ENCODE measurements at regions of chr18 and their contacts with region 1.

Region 1: GRCh38 chr18:48859311-48860268 is 91.2 kb downstream of the SMAD7 start:
- DNase-seq: peak in 1 of 2 experiments; percentile 66
- H3K4me3 ChIP-seq: peak overlapping the region in 1 of 4 experiments; percentile 15; a peak in 1 of 8 replicates
- H3K27ac ChIP-seq: no peak overlapping the region
- H3K4me1 ChIP-seq: peaks cover 0 to 29% (median 22%) of the 10 kb centered on the region in 4 experiments; a peak in 6 of 7 replicates
- H3K27me3 ChIP-seq: no peaks in the 10 kb centered on the region
- CTCF ChIP-seq: no peak
- EP300 ChIP-seq: no peak
- POLR2A ChIP-seq: no peak
- RAD21 ChIP-seq: no peak

Region 2: DNA sequence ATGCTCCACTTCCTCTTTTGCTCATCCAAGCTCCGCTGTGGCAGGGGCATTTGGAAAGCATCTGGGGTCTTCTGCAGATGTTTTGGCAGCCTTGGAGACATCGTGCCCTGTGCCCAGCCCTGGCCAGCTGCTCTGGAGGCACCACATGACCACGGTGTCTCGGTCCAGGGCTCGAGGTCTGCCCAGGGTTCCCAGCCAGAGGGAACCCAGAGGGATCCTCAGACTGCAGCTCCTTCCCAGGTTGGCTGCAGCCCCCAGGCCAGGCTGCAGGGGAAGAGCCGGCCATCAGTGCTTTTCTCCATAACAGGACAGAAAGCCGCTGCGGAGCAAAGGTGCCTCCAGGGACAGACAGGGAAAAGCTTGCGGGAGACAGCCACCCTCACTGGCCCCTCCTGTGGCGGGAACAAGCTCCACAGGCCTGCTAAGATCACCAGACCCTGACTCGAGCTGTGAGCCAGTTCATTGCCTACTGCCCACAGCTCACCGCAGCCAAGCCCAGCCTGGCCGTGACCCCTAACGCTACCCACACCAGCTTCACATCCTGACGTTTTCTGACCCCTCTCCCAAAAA is 16.4 kb after region 1 on chr18:
- CTCF ChIA-PET with region 1: interaction called, 24 read pairs
- POLR2A ChIA-PET with region 1: interaction called, 6 read pairs
- DNase-seq: no peak
- H3K4me3 ChIP-seq: no peak overlapping the region
- H3K27ac ChIP-seq: no peak overlapping the region
- H3K4me1 ChIP-seq: peaks cover 0 to 13% (median 10%) of the 10 kb centered on the region in 4 experiments; a peak in 6 of 7 replicates
- H3K27me3 ChIP-seq: 0 out of 7 replicates have a peak, but pooled peaks cover 0 to 4% (median 1%) of the 10 kb centered on the region in 4 experiments
- CTCF ChIP-seq: peak in 2 of 3 experiments; percentile 35 to 42; a peak in 3 of 4 replicates
- EP300 ChIP-seq: no peak
- POLR2A ChIP-seq: no peak
- RAD21 ChIP-seq: peak in 1 of 2 experiments; percentile 47; a peak in 2 of 4 replicates

Region 3: DNA sequence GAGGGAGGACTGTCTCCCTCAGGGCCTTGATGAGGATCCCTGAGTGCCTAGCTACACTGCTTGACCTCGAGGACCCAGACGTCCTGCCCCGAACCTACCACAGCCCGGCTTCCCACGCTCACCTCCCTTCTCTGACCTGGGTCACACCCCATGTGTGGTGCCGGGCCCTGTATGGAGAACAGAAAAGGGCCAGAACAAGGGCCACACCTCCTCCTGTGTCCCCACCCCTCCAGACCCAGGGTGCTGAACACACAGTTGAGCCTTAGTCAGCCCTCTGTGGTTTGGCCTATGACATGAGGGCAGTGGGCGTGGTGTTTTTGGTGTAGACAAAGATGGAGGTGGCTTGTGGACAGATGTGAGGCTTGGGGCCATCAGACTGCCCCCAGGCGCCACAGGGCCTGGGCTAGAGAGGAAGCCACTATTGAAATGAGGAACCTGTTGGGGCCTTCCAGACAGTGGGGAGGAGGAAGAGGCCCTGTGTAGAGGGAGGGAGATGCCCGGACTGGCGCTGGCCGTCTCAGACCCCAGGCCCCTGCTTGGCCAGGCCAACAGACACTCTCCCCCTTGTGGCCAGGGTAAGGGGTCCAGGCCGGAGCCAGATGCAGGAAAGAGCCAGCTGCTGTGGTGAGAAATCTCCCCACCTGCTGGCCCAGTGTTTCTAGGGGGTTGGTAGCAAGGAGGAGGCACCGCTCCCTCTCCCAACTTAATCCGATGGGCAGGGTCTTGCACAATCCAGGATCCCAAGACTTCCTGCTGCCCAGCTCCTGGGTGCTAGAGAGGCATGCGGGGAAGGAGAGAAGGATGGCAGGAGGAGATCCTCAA is 37.3 kb after region 1 on chr18:
- CTCF ChIA-PET with region 1: interaction called, 16 read pairs
- POLR2A ChIA-PET with region 1: no interaction called
- DNase-seq: peak in 1 of 2 experiments; percentile 70
- H3K4me3 ChIP-seq: no peak overlapping the region
- H3K27ac ChIP-seq: no peak overlapping the region
- H3K4me1 ChIP-seq: peaks cover 0 to 5% (median 1%) of the 10 kb centered on the region in 4 experiments; a peak in 2 of 7 replicates
- H3K27me3 ChIP-seq: no peaks in the 10 kb centered on the region
- CTCF ChIP-seq: peak in 2 of 3 experiments; percentile 78 to 95; a peak in 3 of 4 replicates
- EP300 ChIP-seq: no peak
- POLR2A ChIP-seq: no peak
- RAD21 ChIP-seq: peak; percentile 75 to 86

Region 4: DNA sequence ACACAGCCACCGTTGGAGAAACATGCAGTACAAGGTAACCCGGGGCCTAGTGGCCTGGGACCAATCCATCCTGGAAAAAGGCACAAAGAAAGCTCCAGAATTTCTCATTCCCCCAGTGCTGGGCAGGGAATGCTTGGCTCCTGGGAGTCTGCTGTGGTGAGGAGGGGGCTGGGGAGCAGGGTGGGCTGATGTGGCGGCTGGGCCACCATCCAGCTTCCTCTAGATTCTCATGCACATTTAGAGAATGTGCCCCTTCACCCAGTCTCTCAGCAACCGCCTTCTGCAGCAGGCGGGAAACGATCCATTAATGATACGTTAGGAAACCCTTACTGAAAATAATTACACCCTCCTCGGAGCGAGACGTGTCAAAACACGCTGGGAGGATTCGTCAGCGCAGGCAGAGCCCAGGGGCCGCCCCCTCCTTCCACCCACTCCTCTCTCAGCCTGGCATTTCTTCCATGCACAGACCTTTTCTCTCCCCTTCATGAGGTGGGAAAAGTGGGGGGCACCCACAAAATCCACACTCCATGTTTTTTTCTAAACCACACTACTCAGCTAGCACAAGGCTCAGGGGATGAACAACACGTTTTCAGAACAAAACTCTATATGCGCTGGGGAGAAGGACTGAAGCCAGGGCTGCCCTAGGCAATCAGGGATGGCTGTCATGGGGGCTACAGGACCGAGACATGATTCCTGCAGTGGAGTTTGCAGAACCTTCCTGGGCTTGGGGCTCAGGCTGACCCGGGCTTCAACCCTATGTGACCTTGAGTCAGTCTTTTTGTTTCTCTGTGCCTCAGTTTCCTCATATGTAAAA is 147.3 kb after region 1 on chr18:
- CTCF ChIA-PET with region 1: no interaction called
- POLR2A ChIA-PET with region 1: no interaction called
- DNase-seq: no peak
- H3K4me3 ChIP-seq: no peak overlapping the region
- H3K27ac ChIP-seq: no peak overlapping the region
- H3K4me1 ChIP-seq: peaks cover 0 to 6% (median 2%) of the 10 kb centered on the region in 4 experiments; a peak in 3 of 7 replicates
- H3K27me3 ChIP-seq: no peaks in the 10 kb centered on the region
- CTCF ChIP-seq: no peak
- EP300 ChIP-seq: no peak
- POLR2A ChIP-seq: no peak
- RAD21 ChIP-seq: no peak

Measured in H1 (cell line).